ENCODE measurements at regions of chr1 and their contacts with region 1.

Region 1: GRCh38 chr1:220281159-220281574 is 8.9 kb upstream of the RAB3GAP2 start:
- DNase-seq: no peak
- H3K4me3 ChIP-seq: no peak overlapping the region
- H3K27ac ChIP-seq: no peak overlapping the region
- H3K4me1 ChIP-seq: no peaks in the 10 kb centered on the region
- H3K27me3 ChIP-seq: no peaks in the 10 kb centered on the region
- CTCF ChIP-seq: peak in 2 of 3 experiments; percentile 47 to 65; a peak in 2 of 4 replicates
- EP300 ChIP-seq: no peak
- POLR2A ChIP-seq: no peak
- RAD21 ChIP-seq: peak; percentile 83 to 85

Region 2: GRCh38 chr1:220099826-220100225 is 181.3 kb before region 1 on chr1:
- CTCF ChIA-PET with region 1: no interaction called
- POLR2A ChIA-PET with region 1: no interaction called
- DNase-seq: no peak
- H3K4me3 ChIP-seq: no peak overlapping the region
- H3K27ac ChIP-seq: no peak overlapping the region
- H3K4me1 ChIP-seq: peaks cover 0 to 3% (median 0%) of the 10 kb centered on the region in 4 experiments; a peak in 1 of 7 replicates
- H3K27me3 ChIP-seq: no peaks in the 10 kb centered on the region
- CTCF ChIP-seq: no peak
- EP300 ChIP-seq: no peak
- POLR2A ChIP-seq: no peak
- RAD21 ChIP-seq: no peak

Region 3: DNA sequence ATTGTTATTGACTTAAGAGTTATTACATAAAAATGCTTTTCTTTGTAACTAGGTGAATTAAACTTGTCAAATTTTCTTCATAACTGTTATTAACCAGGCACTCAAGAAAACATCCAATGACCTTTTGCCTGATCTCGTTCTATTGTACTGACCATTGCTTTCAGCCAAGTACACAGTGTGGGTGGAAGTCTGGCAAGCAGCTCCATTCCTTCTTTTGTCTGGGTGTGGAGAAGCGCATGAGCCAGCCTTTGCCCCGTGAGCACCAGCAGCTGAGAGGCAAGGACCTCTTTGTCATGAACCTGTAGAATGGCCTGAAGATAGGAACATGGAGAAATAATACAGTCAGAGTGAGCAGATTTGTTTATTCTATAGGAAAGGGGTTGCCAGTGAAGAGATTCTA is 129.7 kb before region 1 on chr1:
- CTCF ChIA-PET with region 1: no interaction called
- POLR2A ChIA-PET with region 1: no interaction called
- DNase-seq: no peak
- H3K4me3 ChIP-seq: no peak overlapping the region
- H3K27ac ChIP-seq: no peak overlapping the region
- H3K4me1 ChIP-seq: no peaks in the 10 kb centered on the region
- H3K27me3 ChIP-seq: no peaks in the 10 kb centered on the region
- CTCF ChIP-seq: no peak
- EP300 ChIP-seq: no peak
- POLR2A ChIP-seq: no peak
- RAD21 ChIP-seq: no peak

Region 4: DNA sequence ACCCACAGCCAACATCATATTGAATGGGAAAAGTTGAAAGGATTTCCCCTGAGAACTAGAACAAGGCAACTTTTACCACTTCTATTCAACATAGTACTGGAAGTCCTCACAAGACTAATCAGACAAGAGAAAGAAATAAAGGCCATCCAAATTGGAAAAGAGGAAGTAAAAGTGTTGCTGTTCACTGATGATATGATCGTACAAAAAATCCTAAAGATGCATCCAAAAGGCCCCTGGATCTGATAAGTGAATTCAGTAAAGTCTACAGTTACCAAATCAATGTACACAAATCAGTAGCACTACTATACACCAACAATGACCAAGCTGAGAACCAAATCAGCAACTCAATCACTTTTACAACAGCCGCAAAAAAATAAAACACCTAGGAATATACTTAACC is 37.2 kb before region 1 on chr1:
- CTCF ChIA-PET with region 1: no interaction called
- POLR2A ChIA-PET with region 1: no interaction called
- DNase-seq: no peak
- H3K4me3 ChIP-seq: no peak overlapping the region
- H3K27ac ChIP-seq: no peak overlapping the region
- H3K4me1 ChIP-seq: peaks cover 0 to 3% (median 0%) of the 10 kb centered on the region in 4 experiments; a peak in 1 of 7 replicates
- H3K27me3 ChIP-seq: no peaks in the 10 kb centered on the region
- CTCF ChIP-seq: no peak
- EP300 ChIP-seq: no peak
- POLR2A ChIP-seq: no peak
- RAD21 ChIP-seq: no peak

Region 5: DNA sequence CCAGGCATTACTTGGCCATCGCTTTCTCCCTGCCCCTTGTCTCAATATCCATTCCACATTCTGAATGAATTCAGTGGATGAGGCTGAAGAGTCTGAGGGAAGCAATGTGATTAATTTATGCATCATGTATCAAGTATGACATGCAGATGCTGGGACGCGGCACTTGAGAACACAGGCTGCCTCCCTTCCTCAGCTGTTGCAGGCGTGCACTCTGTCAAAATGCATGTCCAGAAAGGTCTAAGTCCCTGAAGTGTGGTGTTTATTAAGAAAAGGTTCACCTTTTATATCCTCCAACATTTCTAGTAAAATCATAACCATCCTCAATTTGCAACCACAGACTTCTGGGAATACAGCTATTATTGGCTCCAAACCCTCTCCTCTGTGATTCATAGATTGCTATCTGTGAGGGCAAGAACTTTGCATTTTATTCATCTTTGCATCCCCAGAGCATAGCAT is 13.7 kb after region 1 on chr1:
- CTCF ChIA-PET with region 1: interaction called, 168 read pairs
- POLR2A ChIA-PET with region 1: interaction called, 4 read pairs
- DNase-seq: no peak
- H3K4me3 ChIP-seq: no peak overlapping the region
- H3K27ac ChIP-seq: no peak overlapping the region
- H3K4me1 ChIP-seq: peaks cover 0 to 11% (median 3%) of the 10 kb centered on the region in 4 experiments; a peak in 2 of 7 replicates
- H3K27me3 ChIP-seq: no peaks in the 10 kb centered on the region
- CTCF ChIP-seq: no peak
- EP300 ChIP-seq: no peak
- POLR2A ChIP-seq: no peak
- RAD21 ChIP-seq: no peak

Region 6: DNA sequence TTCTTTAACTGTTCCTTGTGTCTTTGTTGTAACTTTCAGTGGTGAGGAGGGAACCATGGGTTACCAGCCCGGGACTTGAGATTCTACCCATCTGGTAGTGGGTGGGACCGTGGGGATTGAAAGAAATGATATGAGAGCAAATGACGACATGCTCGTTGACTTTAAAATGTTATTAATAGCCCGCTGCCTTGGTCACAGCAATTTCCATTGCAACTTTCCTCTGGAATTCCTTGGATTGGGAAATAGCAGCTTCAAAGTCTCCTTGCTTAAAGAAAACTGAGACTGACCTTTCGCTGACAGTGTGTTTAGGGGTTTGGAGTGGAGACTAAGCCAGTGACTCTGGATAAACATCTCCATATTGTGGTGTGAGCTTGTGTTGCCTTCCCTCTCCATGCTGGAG is 202.5 kb after region 1 on chr1:
- CTCF ChIA-PET with region 1: interaction called, 11 read pairs
- POLR2A ChIA-PET with region 1: no interaction called
- DNase-seq: no peak
- H3K4me3 ChIP-seq: no peak overlapping the region
- H3K27ac ChIP-seq: no peak overlapping the region
- H3K4me1 ChIP-seq: no peaks in the 10 kb centered on the region
- H3K27me3 ChIP-seq: no peaks in the 10 kb centered on the region
- CTCF ChIP-seq: no peak
- EP300 ChIP-seq: no peak
- POLR2A ChIP-seq: no peak
- RAD21 ChIP-seq: no peak

Region 7: GRCh38 chr1:220733090-220733601 is 452.0 kb after region 1 on chr1:
- CTCF ChIA-PET with region 1: interaction called, 18 read pairs
- POLR2A ChIA-PET with region 1: no interaction called
- DNase-seq: peak; percentile 73 to 97
- H3K4me3 ChIP-seq: peak overlapping the region in 1 of 4 experiments; percentile 33; a peak in 1 of 8 replicates
- H3K27ac ChIP-seq: no peak overlapping the region
- H3K4me1 ChIP-seq: peaks cover 0 to 2% (median 0%) of the 10 kb centered on the region in 4 experiments; a peak in 1 of 7 replicates
- H3K27me3 ChIP-seq: no peaks in the 10 kb centered on the region
- CTCF ChIP-seq: peak; percentile 78 to 91 (median 87)
- EP300 ChIP-seq: no peak
- POLR2A ChIP-seq: no peak
- RAD21 ChIP-seq: peak; percentile 83 to 84

Region 8: GRCh38 chr1:220803401-220804201 is 522.4 kb after region 1 on chr1:
- CTCF ChIA-PET with region 1: interaction called, 10 read pairs
- POLR2A ChIA-PET with region 1: interaction called, 3 read pairs
- DNase-seq: no peak
- H3K4me3 ChIP-seq: no peak overlapping the region
- H3K27ac ChIP-seq: no peak overlapping the region
- H3K4me1 ChIP-seq: no peaks in the 10 kb centered on the region; a peak in 1 of 7 replicates
- H3K27me3 ChIP-seq: no peaks in the 10 kb centered on the region
- CTCF ChIP-seq: peak; percentile 42 to 65 (median 58)
- EP300 ChIP-seq: no peak
- POLR2A ChIP-seq: no peak
- RAD21 ChIP-seq: peak; percentile 53 to 61